ENCODE measurements at regions of chr2 and their contacts with region 1.

Region 1: DNA sequence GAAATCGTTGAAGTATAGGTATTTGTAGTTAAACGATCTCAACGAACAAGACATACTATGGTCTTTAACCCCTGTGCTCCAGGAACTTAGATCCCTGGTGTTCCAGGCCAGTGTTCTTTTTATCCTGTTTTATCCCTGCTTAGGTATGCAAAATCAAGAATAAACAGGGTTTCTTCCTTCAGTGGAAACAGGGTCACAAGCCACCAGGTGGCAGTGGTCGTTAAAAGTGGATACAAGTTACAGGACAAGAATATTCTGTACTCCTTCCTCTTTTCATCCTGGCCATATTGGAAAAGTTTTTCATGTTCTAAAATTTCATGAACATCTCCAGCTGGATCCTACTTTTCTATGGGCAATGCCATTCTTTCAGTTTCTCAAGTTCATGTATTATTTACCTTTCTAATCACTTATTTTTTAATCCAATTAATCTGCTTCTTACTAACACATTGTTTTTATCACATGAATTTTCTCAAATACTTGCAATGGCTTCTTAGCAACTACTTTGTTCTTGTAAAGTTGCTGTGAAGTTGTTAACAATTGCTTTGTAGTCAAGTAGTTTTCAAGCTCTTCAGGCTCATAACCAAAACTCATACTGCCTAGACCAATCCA is 16.4 kb upstream of the HNMT start:
- DNase-seq: peak; percentile 79 to 83
- H3K4me3 ChIP-seq: no peak overlapping the region
- H3K4me1 ChIP-seq: peaks cover 14% of the 10 kb centered on the region
- H3K27me3 ChIP-seq: no peaks in the 10 kb centered on the region

Region 2: GRCh38 chr2:137449454-137449853 is 498.4 kb before region 1 on chr2:
- in situ Hi-C with region 1: no loop called
- DNase-seq: no peak
- H3K4me3 ChIP-seq: no peak overlapping the region
- H3K4me1 ChIP-seq: peaks cover 8% of the 10 kb centered on the region; the same call in 1 of the 2 replicates
- H3K27me3 ChIP-seq: 0 out of 2 replicates have a peak, but pooled peaks cover 2% of the 10 kb centered on the region

Region 3: DNA sequence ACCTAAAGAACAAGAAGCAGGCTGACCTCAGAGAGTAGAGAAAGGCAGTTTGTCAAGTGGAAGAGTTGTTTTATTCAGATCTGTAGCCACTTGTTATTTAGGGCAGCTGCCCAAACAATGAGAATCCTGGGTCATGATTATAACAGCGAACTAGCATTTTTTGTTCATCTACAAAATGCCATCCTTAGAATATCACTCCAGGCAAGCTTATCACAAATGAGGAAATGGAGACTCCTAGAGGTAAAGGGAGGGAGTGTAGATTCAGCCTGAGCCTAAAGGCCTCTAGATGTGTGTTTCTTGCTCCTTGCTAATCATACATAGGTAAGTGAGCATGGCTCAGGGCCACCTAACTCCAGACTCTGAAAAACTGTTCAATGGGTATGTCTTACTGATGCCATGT is 142.5 kb after region 1 on chr2:
- in situ Hi-C with region 1: loop called (anchors 10 kb)
- DNase-seq: peak; percentile 23 to 54
- H3K4me3 ChIP-seq: no peak overlapping the region
- H3K4me1 ChIP-seq: peaks cover 19% of the 10 kb centered on the region
- H3K27me3 ChIP-seq: no peaks in the 10 kb centered on the region

Region 4: DNA sequence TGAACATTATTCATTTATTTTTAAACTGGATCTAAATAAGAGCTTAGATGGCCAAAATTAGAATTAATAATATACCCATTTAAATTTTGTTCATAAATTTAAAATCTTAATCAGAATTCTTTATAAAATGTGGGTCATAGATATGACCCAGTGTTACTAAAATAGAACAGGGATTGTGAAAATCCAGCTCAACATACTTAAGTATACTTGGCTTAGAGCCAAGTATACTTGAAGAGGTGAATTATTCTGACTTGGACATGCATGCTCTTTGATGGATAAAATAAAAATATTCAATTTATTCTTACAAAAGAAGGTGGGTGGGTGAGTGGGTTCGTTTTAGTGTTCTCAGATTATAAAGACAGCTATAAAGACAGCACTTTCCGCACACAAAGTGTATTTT is 624.5 kb after region 1 on chr2:
- in situ Hi-C with region 1: no loop called
- DNase-seq: no peak
- H3K4me3 ChIP-seq: no peak overlapping the region
- H3K4me1 ChIP-seq: no peaks in the 10 kb centered on the region
- H3K27me3 ChIP-seq: no peaks in the 10 kb centered on the region

Region 5: DNA sequence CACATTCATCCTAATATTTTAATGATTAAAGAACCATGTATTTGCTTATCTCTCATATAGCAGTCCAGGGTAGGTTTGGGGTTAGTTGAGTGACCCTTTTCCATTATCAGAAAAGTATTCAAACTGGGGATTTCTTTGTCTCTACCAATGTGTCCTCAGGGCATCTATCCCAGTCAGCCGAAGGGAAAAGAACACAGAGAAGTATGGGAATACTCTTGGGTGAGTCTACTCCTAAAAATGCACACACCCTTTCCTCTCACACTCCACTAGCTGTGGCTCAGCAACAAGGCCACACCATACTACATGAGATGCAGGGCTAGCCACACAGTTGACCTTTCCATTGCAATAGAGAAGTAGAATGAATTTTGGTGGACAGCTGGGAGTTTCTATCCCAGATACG is 718.1 kb after region 1 on chr2:
- in situ Hi-C with region 1: no loop called
- DNase-seq: no peak
- H3K4me3 ChIP-seq: no peak overlapping the region
- H3K4me1 ChIP-seq: peaks cover 3% of the 10 kb centered on the region; the same call in 1 of the 2 replicates
- H3K27me3 ChIP-seq: no peaks in the 10 kb centered on the region

Measured in HAP-1 (cell line).